ENCODE measurements at regions of chr15 and their contacts with region 1.

Region 1: DNA sequence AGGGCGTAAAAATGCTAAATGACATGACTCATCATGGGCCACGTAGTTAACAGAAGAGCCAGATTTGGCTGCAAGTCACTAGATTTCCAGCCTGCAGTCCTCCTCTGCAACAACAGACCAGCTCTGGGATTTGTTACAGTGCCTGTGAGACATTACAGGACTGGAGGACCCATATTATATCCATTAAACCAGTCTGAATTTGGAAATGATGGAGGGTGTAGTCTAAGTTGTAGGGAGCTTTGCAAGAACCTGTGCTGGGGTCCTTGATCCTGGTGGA is 10.8 kb downstream of the ZNF774 start:
- DNase-seq: no peak
- ATAC-seq: no peak
- H3K4me3 ChIP-seq: no peak overlapping the region
- H3K4me3 Mint-ChIP-seq: no peak overlapping the region
- H3K27ac ChIP-seq: no peak overlapping the region
- H3K27ac Mint-ChIP-seq: no peak overlapping the region
- H3K4me1 ChIP-seq: peaks cover 13% of the 10 kb centered on the region
- H3K4me1 Mint-ChIP-seq: peaks cover 28% of the 10 kb centered on the region
- H3K27me3 ChIP-seq: no peaks in the 10 kb centered on the region
- H3K27me3 Mint-ChIP-seq: no peaks in the 10 kb centered on the region
- CTCF ChIP-seq: no peak

Region 2: GRCh38 chr15:90419738-90420406 is 57.0 kb after region 1 on chr15:
- CTCF ChIA-PET with region 1: interaction called, 6 read pairs
- POLR2A ChIA-PET with region 1: interaction called, 3 read pairs
- intact Hi-C with region 1: loop called in 1 of 2 experiments (anchors 5 kb)
- DNase-seq: no peak
- ATAC-seq: no peak
- H3K4me3 ChIP-seq: no peak overlapping the region
- H3K4me3 Mint-ChIP-seq: peak overlapping the region; percentile 26
- H3K27ac ChIP-seq: no peak overlapping the region
- H3K27ac Mint-ChIP-seq: peak overlapping the region; percentile 71
- H3K4me1 ChIP-seq: peaks cover 38% of the 10 kb centered on the region
- H3K4me1 Mint-ChIP-seq: peaks cover 72% of the 10 kb centered on the region
- H3K27me3 ChIP-seq: no peaks in the 10 kb centered on the region
- H3K27me3 Mint-ChIP-seq: no peaks in the 10 kb centered on the region
- CTCF ChIP-seq: no peak

Region 3: DNA sequence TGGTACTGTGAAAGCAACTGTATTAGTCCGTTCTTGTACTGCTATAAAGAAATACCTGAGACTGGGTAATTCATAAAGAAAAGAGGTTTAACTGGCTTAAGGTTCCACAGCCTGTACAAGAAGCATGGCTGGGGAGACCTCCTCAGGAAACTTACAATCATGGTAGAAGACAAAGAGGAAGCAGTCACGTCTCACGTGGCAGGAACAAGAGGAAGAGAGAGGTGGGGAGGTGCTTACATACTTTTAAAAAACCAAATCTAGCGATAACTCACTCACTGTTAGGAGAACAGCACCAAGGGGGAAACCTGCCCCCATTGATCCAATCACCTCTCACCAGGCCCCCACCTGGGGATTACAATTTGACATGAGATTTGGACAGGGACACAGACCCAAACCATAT is 74.1 kb after region 1 on chr15:
- CTCF ChIA-PET with region 1: interaction called, 7 read pairs
- POLR2A ChIA-PET with region 1: interaction called, 4 read pairs
- intact Hi-C with region 1: loop called in 1 of 2 experiments (anchors 5 kb)
- DNase-seq: peak in 1 of 14 experiments; percentile 23
- ATAC-seq: no peak
- H3K4me3 ChIP-seq: no peak overlapping the region
- H3K4me3 Mint-ChIP-seq: no peak overlapping the region
- H3K27ac ChIP-seq: no peak overlapping the region
- H3K27ac Mint-ChIP-seq: peak overlapping the region; percentile 4
- H3K4me1 ChIP-seq: no peaks in the 10 kb centered on the region
- H3K4me1 Mint-ChIP-seq: peaks cover 27% of the 10 kb centered on the region
- H3K27me3 ChIP-seq: no peaks in the 10 kb centered on the region
- H3K27me3 Mint-ChIP-seq: no peaks in the 10 kb centered on the region
- CTCF ChIP-seq: no peak

Region 4: DNA sequence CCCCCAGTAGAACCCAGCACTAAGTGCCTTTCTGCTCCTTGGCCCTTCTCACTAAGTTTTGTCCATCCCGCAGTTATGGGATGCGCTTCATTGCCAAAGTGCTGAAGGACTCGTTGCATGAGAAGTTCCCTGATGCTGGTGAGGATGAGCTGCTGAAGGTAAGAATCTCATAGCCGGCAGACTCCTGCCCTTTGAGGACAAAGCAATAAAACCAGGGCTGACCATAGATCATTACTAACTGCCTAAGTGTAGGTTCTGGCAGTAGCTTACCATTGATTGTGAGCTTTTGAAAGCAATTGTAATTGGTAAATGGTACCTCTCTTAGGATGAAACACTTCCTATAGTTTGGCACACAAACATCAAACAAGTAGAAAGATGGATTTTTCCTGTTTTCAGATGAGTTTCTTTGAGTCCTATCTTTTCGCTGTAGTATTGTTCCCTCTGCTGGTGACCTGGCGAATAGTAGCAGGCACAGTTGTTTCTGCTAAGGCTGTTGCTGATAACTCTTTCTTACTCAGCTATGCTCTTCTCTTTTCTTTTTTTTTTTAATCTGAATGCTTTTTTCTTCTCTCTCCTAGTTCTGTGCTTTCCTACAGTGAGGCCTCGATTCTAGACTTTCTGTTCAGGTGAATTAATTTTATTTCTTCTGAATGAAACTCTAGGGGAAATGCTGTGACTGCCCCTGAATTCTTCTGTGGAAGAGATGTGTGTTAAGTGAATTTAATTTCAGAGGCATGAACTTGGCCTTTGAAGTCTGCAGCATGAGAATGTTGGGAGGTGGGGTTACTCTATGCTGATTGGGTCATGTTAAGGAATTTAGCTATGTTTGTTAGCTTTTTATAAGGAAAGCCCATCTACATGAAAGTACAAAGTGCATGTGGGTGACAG is 119.5 kb after region 1 on chr15:
- CTCF ChIA-PET with region 1: interaction called, 18 read pairs
- POLR2A ChIA-PET with region 1: interaction called, 9 read pairs
- intact Hi-C with region 1: loop called (anchors 1 kb)
- DNase-seq: peak; percentile 17 to 71 (median 38)
- ATAC-seq: peak; percentile 63
- H3K4me3 ChIP-seq: no peak overlapping the region
- H3K4me3 Mint-ChIP-seq: no peak overlapping the region
- H3K27ac ChIP-seq: no peak overlapping the region
- H3K27ac Mint-ChIP-seq: no peak overlapping the region
- H3K4me1 ChIP-seq: peaks cover 20% of the 10 kb centered on the region
- H3K4me1 Mint-ChIP-seq: peaks cover 36% of the 10 kb centered on the region
- H3K27me3 ChIP-seq: no peaks in the 10 kb centered on the region
- H3K27me3 Mint-ChIP-seq: no peaks in the 10 kb centered on the region
- CTCF ChIP-seq: peak; percentile 80

Measured in CD4-positive, alpha-beta T cell (primary cell).